ENCODE measurements at regions of chr7 and their contacts with region 1.

Region 1: GRCh38 chr7:155598810-155599210 is 45.7 kb upstream of the RBM33 start:
- DNase-seq: peak; percentile 27
- H3K4me3 ChIP-seq: no peak overlapping the region
- H3K27ac ChIP-seq: no peak overlapping the region
- H3K27me3 ChIP-seq: no peaks in the 10 kb centered on the region
- CTCF ChIP-seq: peak; percentile 99

Region 2: DNA sequence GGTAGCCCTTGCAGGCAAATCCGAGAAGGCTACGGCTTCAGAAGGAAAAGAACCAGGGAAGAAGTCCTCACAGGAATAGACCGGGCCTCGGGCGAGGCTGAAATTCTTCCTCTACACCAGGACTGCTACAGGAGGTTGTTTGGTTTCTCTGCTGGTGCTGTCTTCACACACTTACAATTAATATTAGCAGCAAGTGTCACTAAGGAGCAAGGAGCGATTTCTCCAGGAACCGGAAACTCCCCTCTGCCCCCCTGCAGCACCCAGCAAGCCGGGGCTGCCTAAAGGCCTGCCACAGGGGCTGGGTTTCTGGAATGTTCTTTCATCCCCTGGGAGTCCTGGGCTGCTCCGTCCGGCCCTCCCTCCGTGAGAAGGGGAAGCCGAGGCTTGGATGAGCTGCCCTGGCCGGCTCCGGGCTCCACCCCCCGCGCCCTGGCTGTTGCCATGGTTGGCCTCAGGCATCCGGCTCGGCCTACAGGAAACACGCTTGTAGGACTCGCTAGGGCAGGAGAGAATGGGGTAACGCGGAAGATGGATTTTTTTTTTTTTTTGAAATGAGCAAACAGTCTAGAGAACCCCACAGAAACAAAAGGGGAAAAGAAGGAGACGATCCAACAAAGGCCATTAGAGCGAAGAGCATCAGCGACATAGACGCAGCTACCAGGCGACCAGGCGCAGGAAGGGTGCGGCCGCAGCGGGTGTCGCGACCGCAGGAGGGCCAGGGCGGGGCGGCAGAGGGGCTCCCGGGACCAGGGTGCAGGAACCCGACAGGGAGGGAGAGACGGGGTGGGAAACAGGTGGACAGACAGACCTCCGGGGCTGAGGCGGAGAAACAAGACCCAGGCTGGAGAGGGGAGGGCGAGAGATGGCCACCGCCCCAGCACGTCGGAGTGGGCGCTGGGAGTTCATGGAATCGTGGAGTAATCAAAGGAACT is 107.8 kb before region 1 on chr7:
- CTCF ChIA-PET with region 1: no interaction called
- POLR2A ChIA-PET with region 1: no interaction called
- DNase-seq: no peak
- H3K4me3 ChIP-seq: no peak overlapping the region
- H3K27ac ChIP-seq: no peak overlapping the region
- H3K27me3 ChIP-seq: peaks cover 13% of the 10 kb centered on the region
- CTCF ChIP-seq: no peak

Region 3: DNA sequence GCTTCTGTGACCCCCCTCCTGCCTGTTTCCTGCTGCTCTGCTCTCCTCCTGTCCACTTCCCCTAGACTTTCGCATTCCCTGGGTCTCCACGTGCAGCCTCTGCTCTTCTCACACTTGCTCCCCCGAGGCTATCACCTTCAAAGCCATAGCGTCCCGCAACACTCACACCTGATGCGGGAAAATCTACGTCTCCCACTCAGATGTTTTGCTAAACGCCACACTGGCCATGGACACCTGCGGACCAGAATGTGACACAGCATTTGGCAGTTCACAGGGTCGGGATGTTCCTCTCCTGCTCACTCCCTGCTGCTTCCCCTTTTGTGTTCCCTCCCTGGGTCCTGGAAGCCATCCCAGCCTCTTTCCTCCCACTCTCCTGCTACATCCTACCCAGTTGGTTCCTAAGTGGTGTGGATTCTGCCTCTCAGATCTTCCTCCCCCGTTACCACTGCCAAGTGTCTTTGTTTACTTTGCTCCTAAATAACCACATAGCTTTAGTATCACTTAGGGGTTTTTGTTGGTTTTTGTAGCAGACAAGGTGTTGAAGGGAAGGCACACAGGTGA is 11.9 kb after region 1 on chr7:
- CTCF ChIA-PET with region 1: interaction called, 31 read pairs
- POLR2A ChIA-PET with region 1: no interaction called
- DNase-seq: no peak
- H3K4me3 ChIP-seq: no peak overlapping the region
- H3K27ac ChIP-seq: no peak overlapping the region
- H3K27me3 ChIP-seq: no peaks in the 10 kb centered on the region
- CTCF ChIP-seq: no peak

Region 4: DNA sequence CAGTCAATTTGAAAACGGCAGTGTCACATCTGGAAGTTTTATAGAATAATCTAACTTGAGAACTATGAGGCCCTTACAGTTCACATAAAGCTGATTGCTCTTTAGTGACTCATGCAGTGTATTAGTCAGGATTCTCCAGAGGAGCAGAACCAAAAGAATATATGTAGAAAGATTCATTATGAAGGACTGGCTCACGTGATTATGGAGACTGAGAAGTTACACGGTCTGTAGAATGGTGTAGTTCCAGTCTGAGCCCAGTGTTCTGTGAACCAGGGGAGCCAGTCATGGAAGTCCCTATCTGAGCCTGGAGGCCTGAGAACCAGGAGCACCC is 67.1 kb after region 1 on chr7:
- CTCF ChIA-PET with region 1: interaction called, 11 read pairs
- POLR2A ChIA-PET with region 1: no interaction called
- DNase-seq: peak; percentile 49
- H3K4me3 ChIP-seq: no peak overlapping the region; the same call in 1 of the 2 replicates
- H3K27ac ChIP-seq: peak overlapping the region; percentile 74
- H3K27me3 ChIP-seq: no peaks in the 10 kb centered on the region
- CTCF ChIP-seq: no peak

Region 5: GRCh38 chr7:155728116-155728515 is 129.3 kb after region 1 on chr7:
- CTCF ChIA-PET with region 1: interaction called, 257 read pairs
- POLR2A ChIA-PET with region 1: no interaction called
- DNase-seq: no peak
- H3K4me3 ChIP-seq: no peak overlapping the region
- H3K27ac ChIP-seq: no peak overlapping the region
- H3K27me3 ChIP-seq: no peaks in the 10 kb centered on the region
- CTCF ChIP-seq: no peak

Region 6: GRCh38 chr7:155762655-155763054 is 163.8 kb after region 1 on chr7:
- CTCF ChIA-PET with region 1: interaction called, 145 read pairs
- POLR2A ChIA-PET with region 1: no interaction called
- DNase-seq: no peak
- H3K4me3 ChIP-seq: no peak overlapping the region
- H3K27ac ChIP-seq: no peak overlapping the region
- H3K27me3 ChIP-seq: no peaks in the 10 kb centered on the region
- CTCF ChIP-seq: no peak